Activated naive CD4-positive, alpha-beta T cell treated with anti-CD3 and anti-CD28 coated beads for 36 hours (primary cell): ENCODE measurements at regions of chr3 and their contacts with region 1.

Region 1: DNA sequence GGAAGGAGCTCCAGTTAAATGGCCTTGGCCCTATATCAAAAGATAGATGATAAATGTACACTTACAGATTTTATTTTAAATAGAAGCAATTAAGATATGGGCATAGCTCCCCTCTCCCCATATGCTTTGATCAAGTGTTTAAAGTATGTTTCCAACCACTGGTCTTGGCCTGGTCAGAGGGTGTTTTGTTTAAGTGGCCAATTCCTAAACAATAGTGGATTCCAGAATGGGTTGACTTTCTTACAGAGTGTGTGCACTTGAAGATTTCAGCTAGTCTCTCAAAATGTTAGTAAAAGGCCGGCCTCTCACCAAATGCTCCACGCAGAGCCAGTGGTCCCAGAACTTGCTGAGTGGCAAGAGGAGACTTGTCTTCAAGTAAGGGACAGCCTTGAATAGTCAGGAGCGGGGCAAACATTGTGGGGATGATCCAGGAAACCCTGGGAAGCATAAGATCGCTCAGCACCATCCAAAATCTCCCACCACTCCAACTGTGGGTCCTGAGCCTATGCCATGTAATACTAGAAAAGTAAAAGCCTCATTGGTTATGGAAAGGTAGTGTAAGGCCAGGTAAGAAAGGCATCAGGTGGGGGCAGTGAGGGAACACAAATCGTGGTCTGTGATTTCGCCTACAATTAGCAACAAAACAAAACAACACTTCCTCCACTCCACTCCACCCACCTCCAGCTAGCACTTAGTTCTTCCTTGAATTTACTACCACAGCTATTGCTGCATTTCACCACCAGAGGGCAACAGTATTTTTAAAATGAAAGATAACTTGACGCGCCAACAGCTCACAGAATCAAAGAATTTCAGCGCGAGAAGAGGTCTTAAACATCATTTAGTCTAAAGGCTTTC is 4.8 kb downstream of the RARRES1 start:
- DNase-seq: peak; percentile 66
- H3K4me3 Mint-ChIP-seq: peak overlapping the region; percentile 19
- H3K27ac Mint-ChIP-seq: no peak overlapping the region
- H3K4me1 Mint-ChIP-seq: peaks cover 23% of the 10 kb centered on the region
- H3K27me3 Mint-ChIP-seq: peaks cover 2% of the 10 kb centered on the region

Region 2: DNA sequence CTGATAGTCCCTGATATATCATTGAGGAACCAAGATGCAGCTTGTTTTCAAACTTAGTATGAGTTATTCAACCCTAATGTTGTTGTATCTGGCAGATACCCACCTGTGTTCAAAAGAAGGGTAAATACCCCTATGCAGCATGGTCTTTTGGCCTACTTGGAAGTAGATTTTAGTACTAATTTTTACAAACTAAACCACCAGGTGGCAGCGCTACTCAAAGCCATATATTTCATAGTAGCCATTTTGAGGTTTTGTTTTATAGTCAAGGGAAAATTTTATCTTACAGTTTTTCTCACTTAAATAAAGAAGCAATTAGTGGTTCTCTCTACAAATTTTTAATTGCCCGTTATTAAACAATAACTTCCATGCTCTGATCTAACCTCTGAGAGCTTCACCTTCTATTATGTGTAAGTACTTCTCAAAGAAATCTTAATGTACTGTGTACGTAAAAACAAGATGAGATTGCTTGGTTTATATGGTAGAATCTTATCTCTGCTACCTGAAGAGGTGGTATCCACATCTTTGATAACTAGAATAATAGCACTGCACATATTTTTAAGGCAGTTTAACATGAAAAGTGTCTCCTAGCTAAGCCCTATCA is 187.9 kb before region 1 on chr3:
- CTCF ChIA-PET with region 1: no interaction called
- intact Hi-C with region 1: loop called (anchors 5 kb)
- DNase-seq: peak; percentile 63
- H3K4me3 Mint-ChIP-seq: no peak overlapping the region
- H3K27ac Mint-ChIP-seq: no peak overlapping the region
- H3K4me1 Mint-ChIP-seq: no peaks in the 10 kb centered on the region
- H3K27me3 Mint-ChIP-seq: no peaks in the 10 kb centered on the region

Region 3: GRCh38 chr3:158713094-158713499 is 14.3 kb before region 1 on chr3:
- CTCF ChIA-PET with region 1: interaction called, 17 read pairs
- intact Hi-C with region 1: no loop called
- DNase-seq: no peak
- H3K4me3 Mint-ChIP-seq: no peak overlapping the region
- H3K27ac Mint-ChIP-seq: peak overlapping the region; percentile 27
- H3K4me1 Mint-ChIP-seq: peaks cover 21% of the 10 kb centered on the region
- H3K27me3 Mint-ChIP-seq: no peaks in the 10 kb centered on the region

Region 4: GRCh38 chr3:158801696-158802408 is 74.4 kb after region 1 on chr3 and contains the start of gene MFSD1:
- CTCF ChIA-PET with region 1: interaction called, 28 read pairs
- intact Hi-C with region 1: no loop called
- DNase-seq: peak; percentile 92
- H3K4me3 Mint-ChIP-seq: peak within 1 kb of the TSS; percentile 84
- H3K27ac Mint-ChIP-seq: peak within 1 kb of the TSS; percentile 44
- H3K4me1 Mint-ChIP-seq: peaks cover 21% of the 10 kb centered on the region
- H3K27me3 Mint-ChIP-seq: no peaks in the 10 kb centered on the region
- total RNA-seq, gene MFSD1: 4.8 to 5.7 TPM

Region 5: DNA sequence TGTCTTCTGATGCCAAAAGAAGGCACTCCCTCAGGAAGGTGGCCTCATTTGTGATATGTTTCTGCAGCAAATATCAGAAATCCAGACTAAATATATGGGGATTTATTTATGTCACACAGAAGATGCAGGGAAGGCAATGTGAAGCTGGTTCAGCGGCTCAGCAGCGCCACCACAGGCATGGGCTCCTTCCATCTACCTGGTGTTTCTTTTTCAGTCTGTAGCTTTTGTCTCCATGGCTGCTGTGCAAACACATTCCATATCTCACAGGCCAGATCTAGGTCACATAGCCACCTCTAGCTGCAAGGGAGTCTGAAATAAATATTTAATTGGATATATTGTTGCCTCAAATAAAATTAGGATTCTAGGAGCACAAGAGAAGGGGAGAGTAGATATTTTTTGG is 759.2 kb after region 1 on chr3:
- CTCF ChIA-PET with region 1: no interaction called
- intact Hi-C with region 1: no loop called
- DNase-seq: peak; percentile 5
- H3K4me3 Mint-ChIP-seq: no peak overlapping the region
- H3K27ac Mint-ChIP-seq: no peak overlapping the region
- H3K4me1 Mint-ChIP-seq: no peaks in the 10 kb centered on the region
- H3K27me3 Mint-ChIP-seq: no peaks in the 10 kb centered on the region